Sciatic nerve (tissue), 2 donors: ENCODE measurements at regions of chr13 and their contacts with region 1.

Region 1: GRCh38 chr13:112873851-112874750 is 94.9 kb upstream of the MCF2L start:
- DNase-seq: peak; percentile 90
- ATAC-seq: peak; percentile 92

Region 2: DNA sequence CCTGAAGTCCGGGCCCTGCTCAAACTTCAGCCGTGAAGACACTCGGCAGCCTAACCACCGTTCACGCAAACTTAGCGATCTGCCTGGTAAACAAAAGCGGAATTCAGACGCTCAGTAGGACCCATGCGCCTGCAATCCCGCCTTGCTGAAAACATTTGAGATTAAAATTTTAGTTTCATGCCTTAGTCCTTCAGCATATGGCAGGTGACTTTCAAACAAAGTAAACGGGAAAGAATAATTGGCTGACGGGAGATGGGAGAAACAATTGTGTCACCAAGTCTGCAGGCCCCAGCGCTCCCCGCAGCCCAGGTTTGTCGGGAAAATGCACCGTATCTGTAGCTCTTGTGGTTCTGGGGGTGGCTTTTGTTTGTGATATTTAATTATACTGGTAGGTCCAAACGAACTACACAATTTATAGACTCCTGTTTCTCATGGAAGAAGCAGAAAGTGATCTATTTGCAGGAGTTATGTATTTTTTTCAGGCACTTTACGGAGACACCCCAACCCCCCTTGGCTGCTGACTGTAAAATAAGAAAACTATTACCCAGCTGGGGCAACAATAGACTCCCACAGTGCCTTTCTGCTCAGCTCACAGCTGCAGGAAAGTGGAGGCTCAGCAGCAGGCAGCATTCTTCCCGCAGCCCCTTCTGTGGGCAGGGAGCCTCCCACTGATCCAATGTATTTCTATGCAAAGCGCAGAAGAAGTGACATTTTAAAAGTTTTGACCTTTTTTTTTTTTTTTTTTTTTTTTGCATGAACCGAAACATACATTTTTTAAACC is 712.4 kb before region 1 on chr13:
- intact Hi-C with region 1: no loop called
- DNase-seq: no peak
- ATAC-seq: no peak

Region 3: DNA sequence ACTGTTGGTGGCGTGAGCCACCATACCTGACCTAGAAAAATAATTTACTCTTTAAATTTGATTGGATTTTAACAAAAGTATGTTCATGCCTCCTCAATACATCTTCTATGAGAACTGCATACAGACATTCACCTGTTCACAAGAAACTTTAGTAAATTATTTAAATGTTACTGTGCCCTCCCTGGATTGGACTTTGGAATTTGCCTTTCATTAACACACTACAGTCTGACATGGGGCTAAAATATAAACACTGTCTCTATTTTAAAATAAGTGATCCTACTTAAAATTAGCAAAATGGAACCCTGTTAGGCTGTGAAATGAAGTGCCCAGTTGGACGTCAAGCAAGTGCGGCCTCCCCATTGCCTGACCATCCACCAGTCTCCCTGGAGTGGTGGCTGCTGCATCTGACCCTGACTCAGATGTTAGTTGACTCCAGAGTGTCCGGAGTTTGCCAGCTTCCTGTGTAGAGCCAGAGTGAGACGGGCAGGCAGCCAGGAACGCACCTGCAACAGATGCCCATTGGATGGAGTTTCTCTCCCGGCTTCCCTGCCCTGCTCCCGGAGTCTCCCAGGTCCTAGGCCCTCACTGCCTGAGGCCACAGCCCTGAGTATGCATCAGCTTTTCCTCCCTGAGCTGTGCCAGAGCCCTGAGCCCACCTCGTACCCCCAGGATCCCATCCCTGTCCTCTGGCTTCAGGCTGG is 230.2 kb before region 1 on chr13:
- intact Hi-C with region 1: loop called (anchors 10 kb)
- DNase-seq: peak; percentile 35
- ATAC-seq: no peak